ENCODE measurements at regions of chr7 and their contacts with region 1.

Region 1: GRCh38 chr7:116316833-116317612 is 106.7 kb downstream of the TES start:
- DNase-seq: no peak
- ATAC-seq: no peak
- H3K4me3 ChIP-seq: no peak overlapping the region
- H3K4me3 Mint-ChIP-seq: no peak overlapping the region
- H3K27ac ChIP-seq: no peak overlapping the region
- H3K27ac Mint-ChIP-seq: no peak overlapping the region
- H3K4me1 ChIP-seq: no peaks in the 10 kb centered on the region
- H3K4me1 Mint-ChIP-seq: no peaks in the 10 kb centered on the region
- H3K27me3 ChIP-seq: no peaks in the 10 kb centered on the region
- H3K27me3 Mint-ChIP-seq: peaks cover 10% of the 10 kb centered on the region
- CTCF ChIP-seq: no peak

Region 2: DNA sequence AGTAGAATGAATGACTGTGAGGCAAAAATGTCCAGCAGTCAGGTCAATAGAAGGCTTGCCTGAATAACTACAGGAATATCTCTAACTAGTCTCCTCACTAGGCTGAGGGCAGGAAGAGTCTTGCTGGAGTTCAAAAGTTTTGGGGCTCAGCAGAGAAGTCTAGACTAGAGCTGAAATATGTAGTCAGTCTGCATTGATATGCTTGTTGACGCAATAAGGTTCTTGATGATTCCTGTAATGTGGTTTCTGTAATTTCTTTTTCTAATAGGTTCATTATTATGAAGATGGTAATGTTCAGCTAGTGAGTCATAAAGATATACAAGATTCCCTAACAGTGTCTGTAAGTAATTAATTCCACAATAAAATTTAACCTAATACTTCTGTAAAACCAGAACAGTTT is 594.8 kb after region 1 on chr7:
- CTCF ChIA-PET with region 1: no interaction called
- POLR2A ChIA-PET with region 1: no interaction called
- intact Hi-C with region 1: loop called in 1 of 2 experiments (anchors 5 kb)
- DNase-seq: no peak
- ATAC-seq: no peak
- H3K4me3 ChIP-seq: no peak overlapping the region
- H3K4me3 Mint-ChIP-seq: no peak overlapping the region
- H3K27ac ChIP-seq: no peak overlapping the region
- H3K27ac Mint-ChIP-seq: no peak overlapping the region
- H3K4me1 ChIP-seq: no peaks in the 10 kb centered on the region
- H3K4me1 Mint-ChIP-seq: no peaks in the 10 kb centered on the region
- H3K27me3 ChIP-seq: no peaks in the 10 kb centered on the region
- H3K27me3 Mint-ChIP-seq: no peaks in the 10 kb centered on the region
- CTCF ChIP-seq: no peak

Region 3: DNA sequence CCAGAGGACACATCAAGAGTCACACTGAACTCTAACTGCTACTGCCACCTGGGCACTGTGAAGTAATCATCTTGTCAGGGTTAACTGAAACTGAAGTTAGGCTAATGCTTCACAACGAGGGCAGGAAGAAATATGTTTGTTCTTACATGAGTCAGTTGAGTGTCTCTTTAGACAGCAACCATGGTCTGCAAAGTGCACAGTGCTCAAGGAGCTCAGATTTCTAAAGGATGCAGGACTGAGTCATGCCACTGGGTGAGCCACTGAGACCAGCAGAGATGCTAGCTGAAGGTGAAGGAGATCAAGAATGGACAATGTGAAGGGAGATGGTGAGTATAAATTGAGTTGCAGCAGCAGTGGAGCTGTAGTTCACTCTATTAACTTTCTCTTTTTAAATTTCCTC is 1632.2 kb after region 1 on chr7:
- CTCF ChIA-PET with region 1: no interaction called
- POLR2A ChIA-PET with region 1: no interaction called
- intact Hi-C with region 1: no loop called
- DNase-seq: no peak
- ATAC-seq: no peak
- H3K4me3 ChIP-seq: no peak overlapping the region
- H3K4me3 Mint-ChIP-seq: no peak overlapping the region
- H3K27ac ChIP-seq: no peak overlapping the region
- H3K27ac Mint-ChIP-seq: no peak overlapping the region
- H3K4me1 ChIP-seq: no peaks in the 10 kb centered on the region
- H3K4me1 Mint-ChIP-seq: no peaks in the 10 kb centered on the region
- H3K27me3 ChIP-seq: no peaks in the 10 kb centered on the region
- H3K27me3 Mint-ChIP-seq: no peaks in the 10 kb centered on the region
- CTCF ChIP-seq: no peak

Measured in CD8-positive, alpha-beta T cell (primary cell).